Transverse colon (tissue), 4 donors: ENCODE measurements at regions of chr13 and their contacts with region 1.

Region 1: GRCh38 chr13:35630551-35631275 is 154.2 kb upstream of the MAB21L1 start:
- DNase-seq: no peak
- H3K4me3 ChIP-seq: no peak overlapping the region
- H3K27ac ChIP-seq: no peak overlapping the region
- H3K4me1 ChIP-seq: no peaks in the 10 kb centered on the region
- H3K27me3 ChIP-seq: no peaks in the 10 kb centered on the region
- CTCF ChIP-seq: peak; percentile 40 to 65 (median 57)
- EP300 ChIP-seq: no peak
- POLR2A ChIP-seq: no peak

Region 2: GRCh38 chr13:35712907-35713761 is 82.4 kb after region 1 on chr13:
- in situ Hi-C with region 1: no loop called
- intact Hi-C with region 1: loop called (anchors 10 kb)
- DNase-seq: no peak
- H3K4me3 ChIP-seq: no peak overlapping the region
- H3K27ac ChIP-seq: no peak overlapping the region
- H3K4me1 ChIP-seq: no peaks in the 10 kb centered on the region
- H3K27me3 ChIP-seq: no peaks in the 10 kb centered on the region
- CTCF ChIP-seq: no peak
- EP300 ChIP-seq: no peak
- POLR2A ChIP-seq: no peak

Region 3: GRCh38 chr13:35789335-35790165 is 158.8 kb after region 1 on chr13:
- in situ Hi-C with region 1: no loop called
- intact Hi-C with region 1: loop called (anchors 10 kb)
- DNase-seq: no peak
- H3K4me3 ChIP-seq: no peak overlapping the region
- H3K27ac ChIP-seq: no peak overlapping the region
- H3K4me1 ChIP-seq: peaks cover 0 to 25% (median 5%) of the 10 kb centered on the region in 4 donors
- H3K27me3 ChIP-seq: no peaks in the 10 kb centered on the region
- CTCF ChIP-seq: peak; percentile 11 to 51 (median 23)
- EP300 ChIP-seq: no peak
- POLR2A ChIP-seq: no peak